Esophagus muscularis mucosa (tissue), 4 donors: ENCODE measurements at regions of chr4 and their contacts with region 1.

Region 1: DNA sequence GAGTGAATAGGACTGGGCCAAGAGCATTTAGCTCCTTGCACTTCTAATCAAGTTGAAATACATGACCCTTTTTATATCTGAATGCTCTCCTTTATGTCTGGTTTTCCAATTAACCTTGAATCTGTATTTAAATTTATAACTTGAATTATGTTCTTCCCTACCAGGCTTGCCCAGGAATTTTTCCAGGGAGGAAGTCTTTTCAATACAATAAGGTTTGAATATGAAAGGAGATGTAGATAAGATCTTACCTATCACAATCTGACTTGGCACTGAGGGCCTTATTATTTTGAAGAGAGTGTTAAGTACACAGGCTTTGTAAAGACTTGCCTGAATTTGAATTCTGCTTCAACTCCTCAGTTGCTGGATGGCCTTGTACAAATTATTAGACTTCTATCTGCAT is 555.7 kb downstream of the PCDH7 start:
- DNase-seq: no peak
- H3K4me3 ChIP-seq: no peak overlapping the region
- H3K27ac ChIP-seq: no peak overlapping the region
- H3K4me1 ChIP-seq: no peaks in the 10 kb centered on the region
- H3K27me3 ChIP-seq: no peaks in the 10 kb centered on the region
- CTCF ChIP-seq: no peak
- EP300 ChIP-seq: no peak
- POLR2A ChIP-seq: no peak

Region 2: DNA sequence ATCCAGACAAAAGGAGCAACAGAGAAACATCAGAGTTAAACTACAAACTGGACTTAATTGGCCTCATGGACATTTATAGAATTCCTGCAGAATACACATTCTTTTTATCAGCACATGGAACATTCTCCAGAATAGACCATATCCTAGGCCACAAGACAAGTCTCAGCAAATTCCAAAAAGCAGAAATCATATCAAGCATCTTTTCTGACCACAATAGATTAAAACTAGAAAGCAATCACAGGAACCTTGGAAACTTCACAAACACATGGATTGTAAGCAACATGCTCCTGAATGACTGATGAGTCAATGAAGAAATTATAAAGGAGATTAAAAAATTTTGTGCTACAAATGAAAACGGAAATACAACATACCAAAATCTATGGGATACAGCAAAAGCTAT is 29.1 kb before region 1 on chr4:
- intact Hi-C with region 1: loop called (anchors 2 kb)
- DNase-seq: no peak
- H3K4me3 ChIP-seq: no peak overlapping the region
- H3K27ac ChIP-seq: no peak overlapping the region
- H3K4me1 ChIP-seq: no peaks in the 10 kb centered on the region
- H3K27me3 ChIP-seq: no peaks in the 10 kb centered on the region
- CTCF ChIP-seq: no peak
- EP300 ChIP-seq: no peak
- POLR2A ChIP-seq: no peak

Region 3: GRCh38 chr4:31592293-31592692 is 316.4 kb after region 1 on chr4:
- intact Hi-C with region 1: no loop called
- DNase-seq: no peak
- H3K4me3 ChIP-seq: no peak overlapping the region
- H3K27ac ChIP-seq: no peak overlapping the region
- H3K4me1 ChIP-seq: no peaks in the 10 kb centered on the region
- H3K27me3 ChIP-seq: no peaks in the 10 kb centered on the region
- CTCF ChIP-seq: no peak
- EP300 ChIP-seq: no peak
- POLR2A ChIP-seq: no peak